Activated CD4-positive, alpha-beta T cell treated with anti-CD3 and anti-CD28 coated beads, Interleukin-2, amount 10 ng/mL, durations not matched to agents 24 days and 14 days (primary cell): ENCODE measurements at regions of chr16 and their contacts with region 1.

Region 1: DNA sequence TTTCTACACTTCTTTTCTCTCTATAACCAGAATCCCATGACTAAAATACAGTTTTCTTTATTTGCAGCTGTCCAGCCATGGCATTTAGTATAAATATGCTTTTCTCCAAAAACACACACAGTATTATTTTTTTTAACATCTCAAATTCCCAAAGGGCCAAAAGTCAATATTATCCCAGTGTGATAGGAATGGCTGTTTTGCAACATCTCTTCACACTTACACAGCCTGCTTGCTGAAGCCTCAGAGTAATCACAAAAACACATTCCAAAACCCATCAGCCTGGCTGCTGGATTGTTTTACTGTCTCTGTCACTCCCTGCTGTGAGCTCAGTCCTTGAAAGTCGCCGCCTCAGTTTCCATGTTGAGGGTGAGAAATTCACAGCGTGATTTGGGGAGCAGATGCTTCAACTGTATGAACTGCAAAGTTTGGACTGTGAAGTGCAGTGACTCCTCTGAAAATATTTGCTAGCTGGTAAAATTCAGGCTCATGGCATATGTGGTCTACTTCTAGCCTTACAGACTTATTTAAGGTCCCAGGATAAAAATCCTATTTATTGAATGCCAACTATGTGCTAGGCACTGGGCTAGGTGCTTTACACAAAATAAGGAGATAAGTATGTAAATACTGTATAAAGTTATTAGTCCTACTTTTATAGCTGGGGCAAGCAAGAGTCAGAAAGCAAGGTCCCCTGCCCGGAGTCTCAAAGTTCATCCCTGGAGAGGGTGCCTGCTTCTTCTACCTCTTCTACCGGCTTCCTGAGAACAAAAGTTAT is 116.5 kb downstream of the SOCS1 start:
- DNase-seq: no peak
- H3K4me3 Mint-ChIP-seq: peak overlapping the region; percentile 83
- H3K27ac Mint-ChIP-seq: peak overlapping the region; percentile 93
- H3K4me1 Mint-ChIP-seq: peaks cover 56% of the 10 kb centered on the region
- H3K27me3 Mint-ChIP-seq: no peaks in the 10 kb centered on the region

Region 2: DNA sequence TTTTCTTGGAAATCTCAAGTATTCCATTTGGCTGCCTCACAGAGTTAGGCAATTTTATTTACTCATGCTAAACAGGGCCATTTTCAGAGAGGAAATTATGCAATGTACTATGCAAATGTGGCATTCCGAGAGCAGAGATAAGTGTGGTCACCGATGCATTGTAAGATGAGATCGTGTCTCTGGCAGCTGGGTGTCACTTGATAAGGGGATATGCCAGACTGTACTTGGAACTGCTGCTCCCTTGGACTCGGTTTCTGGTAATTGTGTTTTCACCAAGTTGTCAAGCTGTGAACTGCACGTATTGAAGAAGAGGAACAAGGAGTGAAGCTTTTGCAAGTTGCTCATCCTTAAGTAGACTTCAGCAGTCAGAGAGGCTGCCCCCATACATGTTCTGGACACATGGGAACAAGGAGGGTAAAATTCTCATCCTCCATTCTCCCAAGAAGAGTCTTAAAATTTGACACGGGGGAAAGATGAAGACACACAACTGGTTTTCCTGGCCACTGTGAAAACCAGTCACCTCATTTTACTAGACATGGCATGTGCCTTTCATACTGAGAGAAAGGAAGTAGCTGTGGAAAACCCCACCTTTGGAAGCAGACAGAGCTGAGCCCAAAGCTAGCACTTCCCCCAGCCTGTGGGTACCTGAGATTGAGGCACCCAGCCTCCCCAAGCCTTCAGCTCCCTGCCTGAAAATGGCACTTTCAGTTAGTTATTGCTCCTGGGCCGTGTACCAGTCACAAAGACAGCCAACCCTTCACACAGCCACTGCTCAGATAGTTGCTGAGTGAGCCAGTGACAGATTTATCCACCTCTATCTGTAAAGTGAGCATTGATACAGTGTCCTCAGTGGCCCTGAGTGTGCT is 34.2 kb before region 1 on chr16:
- intact Hi-C with region 1: loop called (anchors 5 kb)
- DNase-seq: peak; percentile 84
- H3K4me3 Mint-ChIP-seq: peak overlapping the region; percentile 73
- H3K27ac Mint-ChIP-seq: peak overlapping the region; percentile 92
- H3K4me1 Mint-ChIP-seq: peaks cover 65% of the 10 kb centered on the region
- H3K27me3 Mint-ChIP-seq: no peaks in the 10 kb centered on the region

Region 3: GRCh38 chr16:11181899-11182279 is 42.4 kb after region 1 on chr16:
- intact Hi-C with region 1: loop called (anchors 5 kb)
- DNase-seq: peak; percentile 73
- H3K4me3 Mint-ChIP-seq: peak overlapping the region; percentile 57
- H3K27ac Mint-ChIP-seq: peak overlapping the region; percentile 81
- H3K4me1 Mint-ChIP-seq: peaks cover 38% of the 10 kb centered on the region
- H3K27me3 Mint-ChIP-seq: no peaks in the 10 kb centered on the region